ENCODE measurements at regions of chr6 and their contacts with region 1.

Region 1: GRCh38 chr6:150016324-150017185 is 8.8 kb downstream of the RAET1L start:
- DNase-seq: peak; percentile 36
- ATAC-seq: peak; percentile 85
- H3K4me3 Mint-ChIP-seq: no peak overlapping the region
- H3K27ac Mint-ChIP-seq: no peak overlapping the region
- H3K4me1 Mint-ChIP-seq: peaks cover 16% of the 10 kb centered on the region
- H3K27me3 Mint-ChIP-seq: peaks cover 62% of the 10 kb centered on the region
- CTCF ChIP-seq: no peak

Region 2: DNA sequence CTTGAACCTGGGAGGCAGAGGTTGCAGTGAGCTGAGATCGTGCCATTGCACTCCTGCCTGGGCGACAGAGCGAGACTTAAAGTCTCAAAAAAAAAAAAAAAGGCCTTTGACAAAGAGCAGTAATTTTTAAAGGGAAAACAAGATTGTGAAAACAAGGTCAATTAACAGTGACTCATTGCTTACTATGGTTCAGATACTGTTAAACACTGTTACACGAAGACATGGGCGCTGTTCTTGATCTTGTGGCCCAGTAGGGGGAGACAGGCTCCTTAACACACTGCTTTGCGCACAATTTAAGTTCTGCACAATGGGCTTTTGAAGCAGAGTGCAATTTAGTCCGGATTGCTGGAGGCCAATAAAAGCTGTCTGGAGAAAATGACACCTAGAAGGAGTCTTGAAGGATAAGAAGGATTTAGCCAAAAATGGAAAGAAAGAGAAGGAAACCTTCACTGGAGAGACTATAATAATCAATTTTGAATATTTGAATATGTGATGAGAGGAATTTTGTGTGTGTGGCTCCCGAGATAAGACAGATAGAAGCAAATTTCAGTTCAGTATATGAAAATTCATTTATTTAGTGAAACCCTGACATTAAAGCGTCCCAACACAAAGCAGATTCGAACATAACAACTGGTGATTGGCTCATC is 292.7 kb before region 1 on chr6:
- CTCF ChIA-PET with region 1: no interaction called
- POLR2A ChIA-PET with region 1: no interaction called
- intact Hi-C with region 1: loop called (anchors 5 kb)
- DNase-seq: no peak
- ATAC-seq: peak; percentile 91
- H3K4me3 Mint-ChIP-seq: no peak overlapping the region
- H3K27ac Mint-ChIP-seq: peak overlapping the region; percentile 65
- H3K4me1 Mint-ChIP-seq: peaks cover 15% of the 10 kb centered on the region
- H3K27me3 Mint-ChIP-seq: no peaks in the 10 kb centered on the region
- CTCF ChIP-seq: peak; percentile 48

Region 3: DNA sequence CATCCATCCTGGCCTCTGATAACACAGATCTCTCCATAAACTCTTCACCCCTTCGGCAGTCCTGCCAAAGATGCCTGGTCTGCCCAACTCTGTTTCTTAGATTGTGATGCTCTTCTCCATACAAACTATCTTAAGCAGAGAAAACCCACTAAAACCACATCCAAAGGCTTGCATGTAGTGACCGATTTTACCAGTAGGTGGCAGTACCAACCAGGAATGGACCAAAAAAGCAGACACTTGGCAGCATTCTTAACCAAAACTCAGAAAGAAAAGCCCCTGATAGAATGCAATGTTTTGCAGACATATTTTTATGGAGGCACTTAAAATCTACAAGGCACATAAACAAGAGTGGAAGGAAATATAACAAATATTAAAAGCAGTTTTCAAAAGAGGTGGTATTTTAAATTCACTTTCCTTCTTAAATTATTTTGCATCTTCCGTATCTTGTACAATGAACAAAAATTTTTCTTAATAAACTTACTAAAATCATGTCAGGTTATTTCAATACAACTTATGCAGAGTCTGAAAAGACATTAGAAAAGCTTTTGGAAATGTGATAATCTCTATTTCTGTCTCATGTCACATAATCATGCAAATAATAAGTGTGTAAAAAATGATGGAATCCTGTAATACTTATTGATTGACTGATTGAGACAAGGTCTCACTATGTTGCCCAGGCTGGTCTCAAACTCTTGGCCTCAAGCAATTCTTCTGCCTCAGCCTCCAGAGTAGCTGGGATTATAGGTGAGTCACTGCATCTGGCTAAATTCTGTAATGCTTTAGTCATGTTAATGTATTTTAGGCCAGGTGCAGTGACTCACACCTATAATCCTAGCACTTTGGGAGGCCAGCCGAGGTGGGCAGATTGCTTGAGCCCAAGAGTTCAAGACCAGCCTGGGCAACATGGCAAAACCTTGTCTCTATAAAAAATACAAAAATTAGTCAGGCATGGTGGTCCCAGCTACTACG is 181.8 kb before region 1 on chr6:
- CTCF ChIA-PET with region 1: interaction called, 11 read pairs
- POLR2A ChIA-PET with region 1: no interaction called
- intact Hi-C with region 1: loop called (anchors 1 kb)
- DNase-seq: peak; percentile 25
- ATAC-seq: peak; percentile 56
- H3K4me3 Mint-ChIP-seq: no peak overlapping the region
- H3K27ac Mint-ChIP-seq: no peak overlapping the region
- H3K4me1 Mint-ChIP-seq: no peaks in the 10 kb centered on the region
- H3K27me3 Mint-ChIP-seq: peaks cover 13% of the 10 kb centered on the region
- CTCF ChIP-seq: peak; percentile 88

Region 4: GRCh38 chr6:149941583-149942431 is 74.7 kb before region 1 on chr6 and contains the start of gene ULBP2:
- CTCF ChIA-PET with region 1: interaction called, 27 read pairs
- POLR2A ChIA-PET with region 1: no interaction called
- intact Hi-C with region 1: loop called (anchors 1 kb)
- DNase-seq: peak; percentile 53
- ATAC-seq: peak; percentile 70
- H3K4me3 Mint-ChIP-seq: peak within 1 kb of the TSS; percentile 89
- H3K27ac Mint-ChIP-seq: peak within 1 kb of the TSS; percentile 73
- H3K4me1 Mint-ChIP-seq: peaks cover 43% of the 10 kb centered on the region
- H3K27me3 Mint-ChIP-seq: peaks cover 46% of the 10 kb centered on the region
- CTCF ChIP-seq: no peak
- total RNA-seq, gene ULBP2: 0.29 and 0.37 TPM in 2 replicates

Region 5: GRCh38 chr6:149951626-149952025 is 64.9 kb before region 1 on chr6:
- CTCF ChIA-PET with region 1: interaction called, 10 read pairs
- POLR2A ChIA-PET with region 1: no interaction called
- intact Hi-C with region 1: no loop called
- DNase-seq: no peak
- ATAC-seq: no peak
- H3K4me3 Mint-ChIP-seq: no peak overlapping the region
- H3K27ac Mint-ChIP-seq: no peak overlapping the region
- H3K4me1 Mint-ChIP-seq: peaks cover 8% of the 10 kb centered on the region
- H3K27me3 Mint-ChIP-seq: peaks cover 69% of the 10 kb centered on the region
- CTCF ChIP-seq: no peak

Region 6: DNA sequence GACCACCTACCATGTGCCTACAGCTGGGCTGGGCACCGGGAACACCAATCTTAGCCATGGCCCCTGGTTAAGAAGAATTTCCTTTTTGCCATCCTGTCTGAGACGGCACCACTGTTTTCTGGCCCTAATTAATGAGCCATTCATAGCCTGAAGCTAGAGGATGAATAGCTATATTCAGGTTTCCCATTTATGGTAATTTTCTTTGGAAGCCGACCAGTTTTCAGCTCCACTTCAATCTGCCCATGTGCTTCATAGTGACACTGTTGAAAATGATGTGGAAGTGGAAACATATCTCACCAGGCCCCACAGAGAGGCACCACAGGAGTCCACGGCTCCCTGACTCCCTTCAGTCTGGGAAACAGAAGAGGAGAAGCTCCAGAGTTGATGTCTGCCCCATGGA is 74.9 kb after region 1 on chr6:
- CTCF ChIA-PET with region 1: no interaction called
- POLR2A ChIA-PET with region 1: no interaction called
- intact Hi-C with region 1: no loop called
- DNase-seq: no peak
- ATAC-seq: no peak
- H3K4me3 Mint-ChIP-seq: no peak overlapping the region
- H3K27ac Mint-ChIP-seq: no peak overlapping the region
- H3K4me1 Mint-ChIP-seq: no peaks in the 10 kb centered on the region
- H3K27me3 Mint-ChIP-seq: peaks cover 22% of the 10 kb centered on the region
- CTCF ChIP-seq: no peak